ENCODE measurements at regions of chr5 and their contacts with region 1.

Region 1: DNA sequence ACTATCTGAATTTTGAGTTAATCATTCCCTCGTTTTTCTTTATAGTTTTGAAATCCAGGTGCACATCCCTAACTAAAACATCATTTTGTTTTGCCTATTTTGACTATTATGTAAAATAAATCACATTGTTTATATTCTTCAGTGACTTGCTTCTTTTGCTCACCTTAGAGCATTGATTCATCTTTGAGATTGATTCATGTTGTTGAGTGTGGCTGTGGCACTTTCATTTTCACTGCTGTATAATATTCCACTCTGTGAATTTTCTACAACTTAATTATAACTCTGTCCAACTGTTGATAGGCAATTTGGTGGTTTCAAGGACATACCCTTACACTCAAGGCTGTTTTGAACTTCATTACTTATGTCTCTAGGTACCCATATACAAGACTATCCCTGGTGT is 12.5 kb downstream of the NKX2-5 start:
- DNase-seq: no peak
- ATAC-seq: no peak

Region 2: GRCh38 chr5:173029499-173029921 is 193.0 kb before region 1 on chr5:
- intact Hi-C with region 1: no loop called
- DNase-seq: no peak
- ATAC-seq: peak; percentile 56 to 59

Region 3: DNA sequence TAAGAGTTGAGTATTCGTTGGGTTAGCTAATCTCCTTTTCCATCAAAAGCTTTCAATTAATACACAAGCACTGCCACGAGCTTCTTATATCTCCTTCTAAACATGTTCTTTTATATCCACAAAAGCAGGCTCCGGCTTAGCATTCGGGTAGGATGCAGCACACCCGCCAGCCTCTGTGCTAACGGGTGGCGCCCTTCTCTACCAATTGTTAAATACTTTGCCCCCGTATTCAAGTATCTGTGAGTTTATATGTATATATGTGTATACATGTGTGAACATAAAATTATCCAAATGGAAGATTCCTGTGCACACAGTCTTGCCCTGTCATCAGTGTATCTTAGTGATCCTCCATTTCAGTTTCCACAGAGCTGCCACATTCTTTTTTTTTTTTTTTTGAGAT is 50.3 kb before region 1 on chr5:
- intact Hi-C with region 1: loop called (anchors 2 to 10 kb)
- DNase-seq: no peak
- ATAC-seq: no peak

Region 4: DNA sequence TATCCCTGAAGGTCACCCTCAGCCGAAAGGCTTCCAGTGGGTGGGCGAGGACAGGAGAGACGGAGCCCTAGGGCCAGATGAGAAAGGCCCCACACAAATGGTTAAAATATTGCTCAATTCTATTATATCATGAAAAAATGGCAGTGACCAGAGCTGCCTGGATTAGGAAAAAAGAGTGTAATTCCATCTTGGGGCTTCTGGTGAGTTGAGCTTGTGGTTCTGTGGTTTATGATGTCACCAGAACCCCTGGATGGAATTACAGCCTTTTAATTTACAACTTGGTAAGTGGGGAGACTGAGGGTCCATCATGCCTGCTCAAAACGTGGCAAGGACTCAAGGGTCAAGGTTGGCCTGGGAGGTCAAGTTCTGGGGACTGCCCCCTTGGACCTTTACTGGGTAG is 161.2 kb after region 1 on chr5:
- intact Hi-C with region 1: no loop called
- DNase-seq: no peak
- ATAC-seq: no peak

Region 5: GRCh38 chr5:173451031-173451430 is 228.6 kb after region 1 on chr5:
- intact Hi-C with region 1: no loop called
- DNase-seq: no peak
- ATAC-seq: no peak

Region 6: GRCh38 chr5:174120401-174121005 is 898.0 kb after region 1 on chr5:
- intact Hi-C with region 1: no loop called
- DNase-seq: no peak
- ATAC-seq: peak in 1 of 2 donors; percentile 44